Cardiac septum (tissue), 1 donor: ENCODE measurements at regions of chr12 and their contacts with region 1.

Region 1: GRCh38 chr12:106223485-106224354 is 24.1 kb downstream of the CKAP4 start:
- DNase-seq: peak; percentile 91

Region 2: GRCh38 chr12:105420659-105421240 is 803.0 kb before region 1 on chr12:
- intact Hi-C with region 1: loop called (anchors 1 kb)
- DNase-seq: peak; percentile 82

Region 3: GRCh38 chr12:106058256-106059182 is 165.2 kb before region 1 on chr12:
- intact Hi-C with region 1: no loop called
- DNase-seq: no peak

Region 4: DNA sequence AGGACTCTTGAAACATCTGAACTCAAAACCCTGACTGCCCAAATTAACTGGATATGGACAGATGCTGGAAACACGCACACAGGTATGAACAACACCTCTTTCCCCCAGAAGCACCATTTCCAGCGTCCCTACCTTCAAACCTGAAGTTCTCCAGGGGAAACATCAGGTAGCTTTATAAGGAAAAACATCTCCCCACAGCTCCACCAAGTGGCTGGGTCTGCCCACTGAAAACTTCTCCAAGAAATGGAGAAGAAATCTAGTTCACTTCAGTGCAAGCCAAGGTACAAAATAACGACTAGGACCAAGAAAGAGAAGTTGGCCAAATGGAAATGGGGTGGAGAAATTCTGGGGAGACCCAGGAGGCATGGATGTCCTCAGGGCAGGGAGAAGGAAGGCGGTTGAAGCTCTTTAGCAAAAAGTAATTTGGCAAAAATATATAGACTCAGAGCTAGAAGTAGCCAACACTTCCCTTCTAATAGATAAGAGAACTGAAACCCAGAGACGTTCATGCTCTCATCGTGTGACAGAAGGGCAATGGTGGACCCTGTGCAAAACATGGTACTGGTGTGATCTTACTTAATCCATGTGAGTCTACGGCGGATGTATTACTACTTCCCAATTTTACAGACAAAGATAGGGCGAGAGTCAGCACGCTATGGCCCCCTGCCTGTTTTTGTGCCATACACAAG is 74.5 kb before region 1 on chr12:
- intact Hi-C with region 1: loop called (anchors 5 kb)
- DNase-seq: no peak

Region 5: GRCh38 chr12:106282457-106283097 is 58.9 kb after region 1 on chr12:
- intact Hi-C with region 1: loop called (anchors 2 kb)
- DNase-seq: peak; percentile 84